ENCODE measurements at regions of chr20 and their contacts with region 1.

Region 1: DNA sequence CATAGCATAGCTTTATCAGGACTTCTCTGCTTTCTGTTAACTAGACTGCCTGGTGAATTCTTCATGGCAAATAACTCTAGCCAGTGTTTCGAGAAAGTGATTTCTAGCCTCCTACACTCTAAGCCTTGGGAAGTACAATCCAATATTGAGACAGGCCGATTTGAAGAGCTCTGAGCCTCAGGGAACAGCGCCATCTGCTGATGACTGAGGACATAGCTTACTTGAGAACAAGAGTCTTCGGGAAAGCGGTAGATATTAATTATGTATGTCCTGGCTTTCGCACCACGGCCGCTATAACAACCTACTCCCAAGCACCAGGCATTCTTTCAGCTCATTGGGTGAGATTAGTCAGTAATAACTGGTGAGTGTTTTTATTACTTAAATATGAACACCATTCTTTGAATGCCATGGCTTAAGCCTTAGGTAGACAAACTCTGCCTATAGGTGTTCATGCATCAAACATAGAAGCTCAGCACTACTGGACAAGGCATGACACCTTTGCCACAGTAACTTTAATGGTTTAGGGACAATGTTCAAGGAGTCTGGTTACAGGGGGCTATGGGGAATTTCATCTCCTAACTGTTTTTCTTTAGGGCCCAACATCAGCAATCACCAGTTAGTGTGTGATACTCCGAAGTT is 518.6 kb downstream of the BMP2 start:
- DNase-seq: peak; percentile 74 to 93
- H3K4me3 ChIP-seq: no peak overlapping the region
- CTCF ChIP-seq: no peak
- POLR2A ChIP-seq: no peak

Region 2: DNA sequence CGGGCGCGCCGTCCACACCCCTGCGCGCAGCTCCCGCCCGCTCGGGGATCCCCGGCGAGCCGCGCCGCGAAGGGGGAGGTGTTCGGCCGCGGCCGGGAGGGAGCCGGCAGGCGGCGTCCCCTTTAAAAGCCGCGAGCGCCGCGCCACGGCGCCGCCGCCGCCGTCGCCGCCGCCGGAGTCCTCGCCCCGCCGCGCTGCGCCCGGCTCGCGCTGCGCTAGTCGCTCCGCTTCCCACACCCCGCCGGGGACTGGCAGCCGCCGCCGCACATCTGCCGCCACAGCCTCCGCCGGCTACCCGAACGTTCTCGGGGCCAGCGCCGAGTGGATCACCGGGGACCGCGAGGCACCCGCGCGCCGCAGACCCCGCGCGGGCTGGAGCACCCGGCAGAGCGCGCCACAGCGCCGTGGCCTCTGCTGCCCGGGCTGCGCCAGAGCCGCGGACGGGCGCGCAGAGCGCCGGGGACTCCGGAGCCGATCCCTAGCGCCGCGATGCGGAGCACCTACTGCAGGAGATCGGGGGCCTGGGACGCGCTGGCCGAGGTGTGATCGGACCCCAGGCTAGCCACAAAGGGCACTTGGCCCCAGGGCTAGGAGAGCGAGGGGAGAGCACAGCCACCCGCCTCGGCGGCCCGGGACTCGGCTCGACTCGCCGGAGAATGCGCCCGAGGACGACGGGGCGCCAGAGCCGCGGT is 518.4 kb before region 1 on chr20 and contains the start of gene BMP2:
- intact Hi-C with region 1: loop called (anchors 10 kb)
- DNase-seq: peak in 1 of 2 donors; percentile 84
- H3K4me3 ChIP-seq: peak within 1 kb of the TSS; percentile 79
- CTCF ChIP-seq: no peak
- POLR2A ChIP-seq: no peak
- total RNA-seq, gene BMP2: 21.0 to 42.8 (median 23.7) TPM

Region 3: GRCh38 chr20:7302250-7302649 is 16.2 kb after region 1 on chr20:
- intact Hi-C with region 1: no loop called
- DNase-seq: no peak
- H3K4me3 ChIP-seq: no peak overlapping the region
- CTCF ChIP-seq: no peak
- POLR2A ChIP-seq: no peak

Region 4: DNA sequence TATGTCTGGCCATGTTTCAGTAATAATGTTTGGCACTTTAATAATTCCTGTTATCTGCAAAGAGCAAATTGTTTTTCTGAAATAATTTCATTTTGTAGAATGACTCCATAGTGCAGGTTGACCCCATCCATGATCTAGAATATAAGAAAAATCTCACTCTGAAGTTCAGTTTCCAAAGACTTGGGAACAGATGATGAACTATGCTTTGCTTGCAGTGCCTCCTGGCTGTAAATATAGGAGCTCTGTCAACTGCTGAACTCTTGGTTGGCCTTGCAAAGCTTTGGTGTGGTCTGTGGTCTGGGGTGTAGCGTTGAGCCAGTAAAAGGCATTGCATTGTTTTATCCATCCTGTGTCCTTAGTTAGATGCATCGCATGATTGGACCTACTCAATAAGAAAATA is 1886.8 kb after region 1 on chr20:
- intact Hi-C with region 1: no loop called
- DNase-seq: no peak
- H3K4me3 ChIP-seq: no peak overlapping the region
- CTCF ChIP-seq: no peak
- POLR2A ChIP-seq: no peak

Measured in lower leg skin (tissue), 4 donors.